Activated CD8-positive, alpha-beta T cell treated with anti-CD3 and anti-CD28 coated beads, Interleukin-2, amount 10 ng/mL, durations not matched to agents 7 days and 5 days (primary cell): ENCODE measurements at regions of chr4 and their contacts with region 1.

Region 1: GRCh38 chr4:87390891-87391575 is at the start of gene HSD17B11:
- DNase-seq: peak; percentile 91
- ATAC-seq: peak; percentile 99
- H3K4me3 Mint-ChIP-seq: peak within 1 kb of the TSS; percentile 88
- H3K27ac Mint-ChIP-seq: peak within 1 kb of the TSS; percentile 88
- H3K4me1 Mint-ChIP-seq: peaks cover 48% of the 10 kb centered on the region
- H3K27me3 Mint-ChIP-seq: no peaks in the 10 kb centered on the region
- total RNA-seq, gene HSD17B11: 30.2 to 32.2 TPM

Region 2: DNA sequence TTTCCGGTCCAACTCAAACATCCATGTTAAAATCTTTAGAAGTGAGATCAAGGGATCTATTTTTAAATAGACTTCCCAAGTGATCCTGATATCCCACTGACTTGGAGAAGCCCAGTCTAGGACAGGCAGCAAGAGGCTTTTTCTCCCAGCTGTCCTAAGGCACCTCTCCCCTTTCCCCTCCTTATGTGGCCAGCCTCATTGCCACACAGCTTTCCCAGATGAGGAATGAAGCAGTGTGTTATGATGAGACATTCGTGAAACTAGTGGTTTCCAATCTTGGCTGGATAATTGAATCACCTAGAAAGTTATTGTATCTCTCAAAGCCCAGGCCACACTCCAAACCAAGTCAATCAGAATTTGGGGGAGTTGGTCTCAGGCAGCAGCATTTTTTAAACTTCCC is 51.6 kb before region 1 on chr4:
- CTCF ChIA-PET with region 1: no interaction called
- POLR2A ChIA-PET with region 1: no interaction called
- DNase-seq: no peak
- ATAC-seq: no peak
- H3K4me3 Mint-ChIP-seq: no peak overlapping the region
- H3K27ac Mint-ChIP-seq: no peak overlapping the region
- H3K4me1 Mint-ChIP-seq: no peaks in the 10 kb centered on the region
- H3K27me3 Mint-ChIP-seq: no peaks in the 10 kb centered on the region

Region 3: DNA sequence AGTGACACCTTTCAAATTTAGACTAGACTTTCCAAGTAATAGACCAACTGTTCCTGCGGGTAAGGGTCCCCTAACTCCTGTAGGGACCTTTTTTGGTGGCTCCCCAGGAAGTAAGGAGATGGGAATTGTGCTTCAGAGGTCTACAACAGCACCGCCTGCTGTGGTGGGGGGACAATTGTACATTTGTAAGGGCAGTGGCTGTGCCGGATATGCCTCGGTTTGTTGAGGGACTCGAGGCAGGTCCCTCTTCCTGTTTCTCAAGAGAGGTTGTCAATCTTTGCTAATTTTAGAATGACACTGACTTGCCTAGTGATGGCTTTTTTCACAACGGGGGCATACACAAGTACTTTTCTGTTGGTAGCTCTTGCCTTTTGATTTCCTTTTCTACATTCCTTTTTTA is 15.4 kb after region 1 on chr4:
- CTCF ChIA-PET with region 1: interaction called, 13 read pairs
- POLR2A ChIA-PET with region 1: interaction called, 8 read pairs
- DNase-seq: peak; percentile 51
- ATAC-seq: peak; percentile 75
- H3K4me3 Mint-ChIP-seq: peak overlapping the region; percentile 4
- H3K27ac Mint-ChIP-seq: peak overlapping the region; percentile 74
- H3K4me1 Mint-ChIP-seq: peaks cover 20% of the 10 kb centered on the region
- H3K27me3 Mint-ChIP-seq: peaks cover 11% of the 10 kb centered on the region

Region 4: DNA sequence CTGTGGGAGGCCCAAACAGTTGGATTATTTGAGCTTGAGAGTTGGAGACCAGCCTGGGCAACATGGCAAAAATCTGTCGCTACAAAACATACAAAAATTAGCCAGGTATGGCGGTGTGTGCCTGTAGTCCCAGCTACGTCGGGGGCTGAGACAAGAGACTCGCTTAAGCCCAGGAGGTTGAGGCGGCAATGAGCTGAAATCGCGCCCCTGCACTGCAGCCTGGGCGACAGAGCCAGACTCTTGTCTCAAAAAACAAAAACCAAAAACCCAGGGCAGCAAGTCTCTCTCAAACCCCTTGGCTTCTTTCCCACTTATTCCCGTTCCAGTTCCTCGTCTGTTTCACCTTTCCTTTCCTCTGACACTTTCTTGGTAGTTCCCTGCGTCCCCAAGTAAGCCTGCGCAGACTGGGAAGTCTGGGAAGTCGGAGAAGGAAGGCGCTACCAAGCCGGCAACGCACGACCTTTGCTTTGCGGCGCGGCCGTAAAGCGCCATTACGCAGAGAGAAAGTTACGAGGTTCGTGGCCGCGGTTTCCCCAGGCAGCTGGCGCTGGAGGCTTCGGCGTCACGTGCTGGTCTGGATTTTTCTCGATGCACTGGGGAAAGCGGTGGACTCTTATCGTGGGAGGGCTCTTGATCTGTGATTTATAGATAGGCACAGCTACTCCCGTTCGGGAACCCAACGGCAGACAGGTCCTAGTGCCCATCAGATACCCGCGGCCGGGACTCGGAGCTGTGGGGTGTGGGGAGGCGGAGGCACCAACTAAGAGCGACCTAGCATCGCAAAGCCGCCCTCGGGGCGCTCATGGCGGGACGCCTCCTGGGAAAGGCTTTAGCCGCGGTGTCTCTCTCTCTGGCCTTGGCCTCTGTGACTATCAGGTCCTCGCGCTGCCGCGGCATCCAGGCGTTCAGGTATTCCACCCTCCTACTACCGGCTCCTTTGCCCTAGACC is 31.3 kb after region 1 on chr4 and contains the start of gene NUDT9:
- CTCF ChIA-PET with region 1: interaction called, 68 read pairs
- POLR2A ChIA-PET with region 1: interaction called, 26 read pairs
- DNase-seq: peak; percentile 91
- ATAC-seq: peak; percentile 90
- H3K4me3 Mint-ChIP-seq: peak within 1 kb of the TSS; percentile 96
- H3K27ac Mint-ChIP-seq: peak within 1 kb of the TSS; percentile 96
- H3K4me1 Mint-ChIP-seq: peaks cover 27% of the 10 kb centered on the region
- H3K27me3 Mint-ChIP-seq: no peaks in the 10 kb centered on the region
- total RNA-seq, gene NUDT9: 10.9 to 11.0 TPM

Region 5: DNA sequence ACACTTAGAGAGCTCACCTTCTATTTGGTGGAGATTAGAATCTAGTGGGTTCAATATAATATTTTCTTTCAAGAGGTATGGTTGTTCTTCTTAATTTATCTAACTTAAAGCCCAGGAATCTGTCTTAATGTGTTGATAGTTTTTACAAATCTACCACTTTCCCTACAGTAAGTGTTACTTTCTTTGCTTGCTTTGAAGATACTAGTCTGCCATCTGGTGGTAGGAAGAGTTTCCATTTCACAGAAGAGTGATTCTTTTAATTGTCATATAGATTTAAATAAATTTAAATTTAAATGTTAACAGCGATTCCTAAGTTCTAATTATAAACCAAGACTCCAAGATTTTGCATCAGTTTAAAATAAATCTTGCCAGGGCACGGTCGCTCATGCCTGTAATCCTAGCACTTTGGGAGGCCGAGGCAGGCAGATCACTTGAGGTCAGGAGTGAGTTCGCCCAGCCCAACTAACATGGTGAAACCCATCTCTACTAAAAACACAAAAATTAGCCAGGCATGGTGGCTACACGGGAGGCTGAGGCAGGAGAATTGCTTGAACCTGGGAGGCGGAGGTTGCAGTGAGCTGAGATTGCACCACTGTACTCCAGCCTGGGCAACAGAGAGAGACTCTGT is 74.8 kb after region 1 on chr4:
- CTCF ChIA-PET with region 1: interaction called, 12 read pairs
- POLR2A ChIA-PET with region 1: no interaction called
- DNase-seq: peak; percentile 27
- ATAC-seq: no peak
- H3K4me3 Mint-ChIP-seq: no peak overlapping the region
- H3K27ac Mint-ChIP-seq: no peak overlapping the region
- H3K4me1 Mint-ChIP-seq: no peaks in the 10 kb centered on the region
- H3K27me3 Mint-ChIP-seq: no peaks in the 10 kb centered on the region